ENCODE measurements at regions of chr19 and their contacts with region 1.

Region 1: GRCh38 chr19:46288896-46289588 is 7.8 kb upstream of the HIF3A start:
- DNase-seq: peak; percentile 82 to 94 (median 89)
- H3K4me3 ChIP-seq: no peak overlapping the region
- H3K27ac ChIP-seq: peak overlapping the region; percentile 60 to 91 (median 81)
- H3K4me1 ChIP-seq: peaks cover 4 to 11% of the 10 kb centered on the region in 2 donors
- H3K27me3 ChIP-seq: no peaks in the 10 kb centered on the region
- CTCF ChIP-seq: no peak
- POLR2A ChIP-seq: no peak

Region 2: DNA sequence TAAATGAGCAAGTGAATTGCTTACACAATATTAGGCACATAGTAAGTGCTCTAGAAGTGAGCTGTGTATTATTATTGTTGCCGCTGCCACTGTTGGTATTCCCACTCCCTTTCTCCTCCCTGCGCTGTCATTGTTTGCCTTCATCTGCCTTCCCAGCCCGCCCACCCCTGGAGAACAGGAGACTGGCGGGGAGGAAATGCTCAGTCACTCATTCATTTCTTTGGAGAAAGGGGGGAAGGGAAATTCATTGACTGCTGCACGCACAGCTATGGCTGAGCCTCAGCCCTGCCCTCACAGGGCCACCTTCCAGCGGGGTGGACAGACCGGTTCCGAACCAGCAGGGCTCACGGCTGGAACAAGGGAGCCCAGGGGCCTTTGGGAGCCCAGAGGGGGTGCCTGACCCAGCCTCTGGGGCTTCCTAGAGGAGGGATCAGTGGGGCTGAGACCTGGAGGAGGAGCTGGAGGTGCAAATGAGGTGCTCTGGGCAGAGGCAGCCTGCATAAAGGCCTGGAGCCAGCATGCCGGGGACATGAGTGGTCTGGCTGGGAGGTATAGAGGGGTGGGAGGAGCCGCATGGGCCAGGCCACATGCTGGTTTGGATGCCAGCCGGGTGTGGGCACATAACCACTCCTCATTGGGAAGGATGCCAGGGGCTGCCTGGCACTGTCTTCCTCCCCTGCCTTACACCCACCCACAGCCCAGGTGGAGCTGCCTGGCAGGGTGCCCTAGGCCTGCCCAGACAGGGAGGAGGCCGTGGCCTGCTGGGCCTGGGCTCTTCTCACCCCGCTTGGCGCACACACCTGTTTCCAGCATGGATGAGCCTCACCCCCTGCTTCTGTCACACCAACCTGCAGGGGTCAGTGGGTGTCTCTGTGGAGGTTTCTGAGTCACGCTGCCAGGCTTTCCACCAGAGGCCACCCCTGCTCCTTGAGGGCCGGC is 84.6 kb after region 1 on chr19:
- intact Hi-C with region 1: loop called in 1 of 2 experiments (anchors 10 kb)
- DNase-seq: peak in 6 of 7 donors; percentile 49 to 78 (median 72)
- H3K4me3 ChIP-seq: no peak overlapping the region
- H3K27ac ChIP-seq: peak overlapping the region in 3 of 5 donors; percentile 29 to 75 (median 65)
- H3K4me1 ChIP-seq: peaks cover 12 to 42% of the 10 kb centered on the region in 2 donors
- H3K27me3 ChIP-seq: no peaks in the 10 kb centered on the region
- CTCF ChIP-seq: no peak
- POLR2A ChIP-seq: no peak

Region 3: DNA sequence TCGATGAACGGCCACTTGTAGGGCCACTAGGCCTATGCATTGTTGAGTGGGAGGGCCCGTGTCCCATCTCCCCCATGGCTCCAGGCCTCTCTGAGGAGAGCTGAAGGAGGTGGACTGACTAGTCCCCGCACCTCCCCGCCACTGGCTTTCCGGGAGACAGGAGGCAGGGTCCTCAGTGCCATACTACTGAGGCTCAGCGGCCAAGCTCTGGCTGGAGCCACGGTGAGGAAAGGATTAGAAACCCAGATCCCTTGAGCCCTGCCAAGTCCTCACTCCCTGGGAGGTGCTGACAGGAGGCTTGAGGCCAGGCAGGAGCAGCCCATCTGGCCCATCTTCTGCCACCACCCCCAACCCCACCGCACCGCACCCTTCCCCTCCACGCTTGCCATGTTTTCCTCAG is 95.4 kb after region 1 on chr19:
- intact Hi-C with region 1: loop called (anchors 10 kb)
- DNase-seq: peak in 4 of 7 donors; percentile 12 to 48 (median 18)
- H3K4me3 ChIP-seq: no peak overlapping the region
- H3K27ac ChIP-seq: no peak overlapping the region
- H3K4me1 ChIP-seq: peaks cover 0 to 27% of the 10 kb centered on the region in 2 donors
- H3K27me3 ChIP-seq: no peaks in the 10 kb centered on the region
- CTCF ChIP-seq: no peak
- POLR2A ChIP-seq: no peak